ENCODE measurements at regions of chr3 and their contacts with region 1.

Region 1: DNA sequence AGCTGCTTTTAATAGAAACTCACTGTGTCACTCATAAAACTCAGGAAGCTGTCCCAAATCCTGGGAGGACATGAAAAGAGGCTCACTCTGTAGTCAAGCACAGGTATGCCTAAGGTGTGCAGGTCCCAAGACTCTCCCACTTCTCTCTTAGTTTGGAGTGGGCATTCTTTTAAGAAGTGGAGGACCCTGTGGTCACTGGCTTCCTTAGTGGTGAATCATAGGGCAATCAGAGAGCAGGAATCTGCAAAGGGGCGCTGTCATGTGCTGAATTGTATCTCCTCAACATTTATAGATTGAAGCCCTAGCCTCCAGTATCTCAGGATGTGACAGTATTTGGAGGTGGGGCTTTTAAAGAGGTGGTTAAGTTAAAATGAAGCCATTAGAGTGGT is 47.2 kb upstream of the ZBTB38 start:
- DNase-seq: no peak
- ATAC-seq: no peak
- H3K4me3 ChIP-seq: no peak overlapping the region
- H3K27ac ChIP-seq: no peak overlapping the region
- H3K4me1 ChIP-seq: peaks cover 46% of the 10 kb centered on the region
- H3K27me3 ChIP-seq: no peaks in the 10 kb centered on the region
- CTCF ChIP-seq: no peak
- EP300 ChIP-seq: no peak
- POLR2A ChIP-seq: no peak
- RAD21 ChIP-seq: no peak

Region 2: GRCh38 chr3:141355242-141355641 is 34.1 kb after region 1 on chr3:
- CTCF ChIA-PET with region 1: no interaction called
- POLR2A ChIA-PET with region 1: no interaction called
- in situ Hi-C with region 1: loop called (anchors 5 kb)
- intact Hi-C with region 1: no loop called
- DNase-seq: no peak
- ATAC-seq: no peak
- H3K4me3 ChIP-seq: no peak overlapping the region
- H3K27ac ChIP-seq: no peak overlapping the region
- H3K4me1 ChIP-seq: no peaks in the 10 kb centered on the region
- H3K27me3 ChIP-seq: no peaks in the 10 kb centered on the region; a peak in 1 of 5 replicates
- CTCF ChIP-seq: no peak
- EP300 ChIP-seq: no peak
- POLR2A ChIP-seq: no peak
- RAD21 ChIP-seq: no peak

Measured in HepG2 (cell line).